AG04450 (cell line): ENCODE measurements at regions of chr22 and their contacts with region 1.

Region 1: GRCh38 chr22:20885557-20886323 is 26.9 kb downstream of the SNAP29 start:
- DNase-seq: peak; percentile 62
- H3K4me3 ChIP-seq: no peak overlapping the region
- H3K27ac ChIP-seq: peak overlapping the region; percentile 65
- H3K27me3 ChIP-seq: no peaks in the 10 kb centered on the region
- CTCF ChIP-seq: peak; percentile 98

Region 2: GRCh38 chr22:20783844-20784723 is 101.7 kb before region 1 on chr22:
- CTCF ChIA-PET with region 1: interaction called, 11 read pairs
- POLR2A ChIA-PET with region 1: no interaction called
- DNase-seq: peak; percentile 20
- H3K4me3 ChIP-seq: no peak overlapping the region
- H3K27ac ChIP-seq: no peak overlapping the region
- H3K27me3 ChIP-seq: no peaks in the 10 kb centered on the region
- CTCF ChIP-seq: peak; percentile 76

Region 3: GRCh38 chr22:20803696-20804324 is 81.9 kb before region 1 on chr22:
- CTCF ChIA-PET with region 1: interaction called, 38 read pairs
- POLR2A ChIA-PET with region 1: interaction called, 4 read pairs
- DNase-seq: peak; percentile 16
- H3K4me3 ChIP-seq: no peak overlapping the region
- H3K27ac ChIP-seq: no peak overlapping the region
- H3K27me3 ChIP-seq: no peaks in the 10 kb centered on the region
- CTCF ChIP-seq: peak; percentile 79

Region 4: DNA sequence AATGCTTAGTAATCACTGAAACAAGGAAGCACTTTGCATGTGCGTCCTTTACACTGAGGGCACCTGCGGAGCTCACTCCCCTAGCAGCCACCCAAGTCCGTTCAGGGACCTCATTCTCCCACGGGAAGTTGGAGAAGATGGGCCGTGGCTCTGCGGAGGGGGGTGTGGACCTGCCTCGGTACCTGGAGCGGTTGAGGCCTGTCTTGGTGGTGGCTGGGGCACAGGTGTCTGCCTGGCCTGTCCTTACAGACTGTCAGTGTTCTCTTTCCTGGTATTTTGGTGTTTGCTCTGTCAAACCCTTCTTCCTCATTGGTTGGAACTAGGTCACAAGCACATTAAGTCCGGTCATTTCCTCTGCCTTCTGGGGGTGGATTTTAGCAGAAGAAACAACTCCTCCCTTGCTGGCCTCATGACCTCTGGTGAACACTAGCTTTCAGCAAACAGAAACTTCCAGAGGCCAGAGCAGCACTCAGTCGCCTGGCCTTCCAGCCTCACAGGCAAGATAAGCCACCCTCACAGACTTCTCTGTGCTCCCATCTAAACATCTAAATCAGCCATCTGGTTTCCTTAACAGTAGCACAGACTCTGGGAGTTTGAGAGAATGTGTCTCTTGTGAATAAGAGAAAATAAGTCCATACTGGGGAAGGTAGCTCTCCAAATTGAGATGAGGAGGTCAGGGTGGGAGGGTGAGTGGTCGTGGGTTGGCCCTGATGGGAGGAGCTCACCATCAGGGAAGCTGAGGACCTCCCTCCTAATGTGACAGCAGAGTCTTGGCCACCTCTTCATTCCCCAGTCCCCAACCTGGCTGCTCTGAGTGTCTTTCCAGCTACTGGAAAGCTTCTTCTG is 18.3 kb before region 1 on chr22:
- CTCF ChIA-PET with region 1: interaction called, 39 read pairs
- POLR2A ChIA-PET with region 1: no interaction called
- DNase-seq: no peak
- H3K4me3 ChIP-seq: no peak overlapping the region
- H3K27ac ChIP-seq: peak overlapping the region; percentile 52
- H3K27me3 ChIP-seq: no peaks in the 10 kb centered on the region
- CTCF ChIP-seq: no peak

Region 5: GRCh38 chr22:20904008-20904979 is 18.6 kb after region 1 on chr22:
- CTCF ChIA-PET with region 1: interaction called, 13 read pairs
- POLR2A ChIA-PET with region 1: interaction called, 4 read pairs
- DNase-seq: peak; percentile 91
- H3K4me3 ChIP-seq: no peak overlapping the region
- H3K27ac ChIP-seq: peak overlapping the region; percentile 69
- H3K27me3 ChIP-seq: no peaks in the 10 kb centered on the region
- CTCF ChIP-seq: no peak

Region 6: GRCh38 chr22:20926243-20926642 is 40.5 kb after region 1 on chr22:
- CTCF ChIA-PET with region 1: interaction called, 11 read pairs
- POLR2A ChIA-PET with region 1: no interaction called
- DNase-seq: no peak
- H3K4me3 ChIP-seq: no peak overlapping the region
- H3K27ac ChIP-seq: no peak overlapping the region
- H3K27me3 ChIP-seq: no peaks in the 10 kb centered on the region
- CTCF ChIP-seq: no peak

Region 7: DNA sequence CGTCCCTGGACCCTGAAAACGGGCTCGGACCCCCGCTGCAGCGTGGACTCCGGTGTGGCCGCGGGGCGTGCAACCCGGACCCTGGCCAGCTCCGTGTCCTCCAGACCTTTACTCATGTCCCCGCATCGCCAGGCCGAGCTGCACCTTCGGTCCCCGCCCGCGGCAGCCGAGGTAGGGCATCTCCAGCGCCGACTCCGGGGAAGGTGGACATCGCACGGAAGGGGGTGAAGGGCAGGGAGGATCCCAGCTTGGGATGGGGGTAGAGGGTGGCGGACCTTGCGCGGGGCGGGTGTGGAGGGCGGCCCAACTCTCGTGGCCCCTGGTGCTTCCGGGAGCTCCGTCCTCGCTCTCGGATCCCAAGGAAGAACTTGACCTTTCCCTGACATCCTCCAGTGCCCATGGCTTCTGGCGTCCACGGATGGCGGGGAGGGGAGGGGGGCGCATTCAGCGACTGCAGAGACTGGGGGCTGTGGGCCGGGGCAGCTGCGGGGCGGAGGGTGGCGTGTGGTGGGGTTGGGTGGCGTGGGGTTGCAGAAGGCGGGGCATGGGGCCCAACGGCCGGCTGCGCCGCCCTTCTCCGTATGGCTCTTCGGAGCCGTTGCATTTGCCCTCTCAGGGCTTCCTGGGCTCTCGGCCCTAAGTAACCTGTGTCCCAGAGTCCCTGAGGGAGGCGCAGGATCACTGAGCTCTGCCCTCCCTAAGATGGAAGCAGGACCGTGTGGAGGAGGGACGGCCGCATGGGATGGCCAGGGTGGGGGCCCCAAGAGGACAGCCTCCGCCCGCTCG is 71.8 kb after region 1 on chr22:
- CTCF ChIA-PET with region 1: interaction called, 25 read pairs
- POLR2A ChIA-PET with region 1: interaction called, 6 read pairs
- DNase-seq: no peak
- H3K4me3 ChIP-seq: peak overlapping the region; percentile 70
- H3K27ac ChIP-seq: no peak overlapping the region
- H3K27me3 ChIP-seq: no peaks in the 10 kb centered on the region
- CTCF ChIP-seq: no peak